Psoas muscle (tissue), 8 donors: ENCODE measurements at regions of chr1 and their contacts with region 1.

Region 1: DNA sequence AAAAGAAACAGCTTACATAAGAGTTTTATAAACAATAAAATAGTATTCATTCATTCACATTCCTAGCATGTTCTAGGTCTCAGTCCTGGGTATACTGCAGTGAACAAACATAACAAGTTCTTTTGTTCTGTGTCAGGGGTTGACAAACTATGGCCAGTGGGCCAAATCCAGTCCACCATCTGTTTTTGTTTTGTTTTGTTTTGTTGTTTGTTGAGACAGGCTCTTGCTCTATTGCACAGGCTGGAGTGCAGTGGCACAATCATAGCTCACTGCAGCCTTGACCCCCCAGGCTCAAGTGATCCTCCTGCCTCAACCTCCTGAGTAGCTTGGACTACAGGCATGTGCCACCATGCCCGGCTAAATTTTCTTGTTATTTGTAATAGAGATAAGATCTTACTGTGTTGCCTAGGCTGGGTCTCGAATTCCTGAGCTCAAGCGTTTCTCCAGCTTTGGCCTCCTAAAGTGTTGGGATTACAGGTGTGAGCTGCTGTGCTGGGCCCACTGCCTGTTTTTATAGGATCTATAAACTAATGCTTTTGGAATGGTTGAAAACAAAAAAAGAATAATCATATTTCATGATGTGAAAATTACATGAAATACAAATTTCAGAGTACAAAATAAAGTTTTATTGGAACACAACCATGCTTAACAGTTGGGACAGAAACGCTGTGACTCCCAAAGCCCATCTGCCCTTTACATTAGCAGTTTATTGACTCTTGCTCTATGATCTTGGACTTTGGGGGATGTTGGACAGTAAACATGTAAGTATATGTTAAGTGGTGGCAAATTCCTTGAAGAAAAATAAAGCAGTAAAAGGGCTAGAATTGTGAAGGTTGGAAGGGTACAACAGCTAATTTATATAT is 17.9 kb downstream of the CAPZA1 start:
- DNase-seq: no peak
- ATAC-seq: peak in 2 of 4 donors; percentile 53 to 61
- H3K4me3 ChIP-seq: no peak overlapping the region
- H3K27ac ChIP-seq: peak overlapping the region; percentile 33
- H3K4me1 ChIP-seq: peaks cover 47% of the 10 kb centered on the region
- H3K27me3 ChIP-seq: no peaks in the 10 kb centered on the region
- CTCF ChIP-seq: no peak

Region 2: DNA sequence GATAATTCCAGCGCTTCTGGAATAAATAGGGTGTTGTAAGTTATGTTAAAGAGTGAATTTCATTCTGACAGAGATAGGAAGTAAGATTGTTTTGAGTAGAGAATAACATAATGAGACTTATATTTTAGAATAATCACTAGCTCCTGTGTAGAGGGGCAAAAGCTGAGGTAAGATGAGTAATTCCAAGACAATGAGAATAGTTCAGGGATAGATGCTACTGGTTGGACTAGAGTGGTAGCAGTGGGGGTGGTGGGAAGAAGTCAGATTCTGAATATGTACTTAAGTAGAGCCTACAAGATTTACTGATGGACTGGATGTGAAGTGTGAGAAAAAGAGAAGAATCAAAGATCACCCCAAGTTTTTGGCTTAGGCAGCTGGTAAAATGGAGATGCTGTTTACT is 13.7 kb after region 1 on chr1:
- intact Hi-C with region 1: loop called in 1 of 2 experiments (anchors 2 kb)
- DNase-seq: no peak
- ATAC-seq: no peak
- H3K4me3 ChIP-seq: no peak overlapping the region
- H3K27ac ChIP-seq: no peak overlapping the region
- H3K4me1 ChIP-seq: no peaks in the 10 kb centered on the region
- H3K27me3 ChIP-seq: no peaks in the 10 kb centered on the region
- CTCF ChIP-seq: no peak